Heart left ventricle (tissue), 16 donors: ENCODE measurements at regions of chr17 and their contacts with region 1.

Region 1: DNA sequence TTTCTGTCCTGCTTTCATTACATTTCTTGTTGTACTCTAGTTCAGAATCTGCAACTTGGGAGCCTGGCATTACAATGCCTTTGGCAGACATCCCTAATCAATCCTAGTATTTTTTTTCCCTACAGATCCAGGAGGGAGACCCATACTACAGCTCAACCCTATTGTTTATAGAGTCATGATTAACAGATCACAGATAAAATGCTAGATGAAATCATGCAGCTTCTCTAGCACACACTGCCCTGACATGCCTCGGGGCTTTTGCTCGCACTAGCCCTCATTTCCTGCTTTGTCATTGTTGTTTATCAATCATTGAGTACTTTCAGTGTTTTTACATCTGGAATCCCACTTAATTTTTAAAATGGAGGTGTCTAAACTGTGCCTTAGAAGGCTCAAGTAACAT is 412.5 kb downstream of the CA10 start:
- DNase-seq: no peak
- ATAC-seq: no peak
- H3K4me3 ChIP-seq: no peak overlapping the region
- H3K27ac ChIP-seq: no peak overlapping the region
- H3K4me1 ChIP-seq: no peaks in the 10 kb centered on the region
- H3K27me3 ChIP-seq: no peaks in the 10 kb centered on the region
- CTCF ChIP-seq: no peak
- POLR2A ChIP-seq: no peak

Region 2: GRCh38 chr17:51805765-51806164 is 59.8 kb after region 1 on chr17:
- intact Hi-C with region 1: loop called in 1 of 10 experiments (anchors 10 kb)
- DNase-seq: no peak
- ATAC-seq: no peak
- H3K4me3 ChIP-seq: no peak overlapping the region
- H3K27ac ChIP-seq: no peak overlapping the region
- H3K4me1 ChIP-seq: no peaks in the 10 kb centered on the region
- H3K27me3 ChIP-seq: no peaks in the 10 kb centered on the region
- CTCF ChIP-seq: no peak
- POLR2A ChIP-seq: no peak

Region 3: DNA sequence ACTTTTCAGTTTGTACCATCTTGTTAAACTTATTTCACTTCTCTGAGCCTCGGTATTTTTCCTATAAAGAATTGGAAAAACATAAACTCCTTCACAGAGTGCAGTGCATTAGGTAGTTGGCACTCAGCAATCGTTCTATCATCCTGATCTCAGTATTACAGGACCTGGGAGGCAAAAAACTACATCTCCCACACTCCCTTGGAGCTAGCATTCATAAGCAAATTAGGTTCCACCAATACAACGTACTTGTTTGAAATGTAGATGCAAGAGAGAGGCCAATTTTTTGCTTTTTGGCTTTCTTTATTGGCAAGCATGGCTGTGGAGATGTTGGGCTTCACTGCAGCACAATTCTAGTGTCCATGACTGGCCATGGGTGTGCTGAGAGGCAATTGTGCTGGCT is 127.3 kb after region 1 on chr17:
- intact Hi-C with region 1: loop called in 1 of 10 experiments (anchors 5 kb)
- DNase-seq: no peak
- ATAC-seq: no peak
- H3K4me3 ChIP-seq: no peak overlapping the region
- H3K27ac ChIP-seq: no peak overlapping the region
- H3K4me1 ChIP-seq: no peaks in the 10 kb centered on the region
- H3K27me3 ChIP-seq: peaks cover 0 to 7% (median 0%) of the 10 kb centered on the region in 9 donors
- CTCF ChIP-seq: no peak
- POLR2A ChIP-seq: no peak